Caco-2 (cell line): ENCODE measurements at regions of chr12 and their contacts with region 1.

Region 1: DNA sequence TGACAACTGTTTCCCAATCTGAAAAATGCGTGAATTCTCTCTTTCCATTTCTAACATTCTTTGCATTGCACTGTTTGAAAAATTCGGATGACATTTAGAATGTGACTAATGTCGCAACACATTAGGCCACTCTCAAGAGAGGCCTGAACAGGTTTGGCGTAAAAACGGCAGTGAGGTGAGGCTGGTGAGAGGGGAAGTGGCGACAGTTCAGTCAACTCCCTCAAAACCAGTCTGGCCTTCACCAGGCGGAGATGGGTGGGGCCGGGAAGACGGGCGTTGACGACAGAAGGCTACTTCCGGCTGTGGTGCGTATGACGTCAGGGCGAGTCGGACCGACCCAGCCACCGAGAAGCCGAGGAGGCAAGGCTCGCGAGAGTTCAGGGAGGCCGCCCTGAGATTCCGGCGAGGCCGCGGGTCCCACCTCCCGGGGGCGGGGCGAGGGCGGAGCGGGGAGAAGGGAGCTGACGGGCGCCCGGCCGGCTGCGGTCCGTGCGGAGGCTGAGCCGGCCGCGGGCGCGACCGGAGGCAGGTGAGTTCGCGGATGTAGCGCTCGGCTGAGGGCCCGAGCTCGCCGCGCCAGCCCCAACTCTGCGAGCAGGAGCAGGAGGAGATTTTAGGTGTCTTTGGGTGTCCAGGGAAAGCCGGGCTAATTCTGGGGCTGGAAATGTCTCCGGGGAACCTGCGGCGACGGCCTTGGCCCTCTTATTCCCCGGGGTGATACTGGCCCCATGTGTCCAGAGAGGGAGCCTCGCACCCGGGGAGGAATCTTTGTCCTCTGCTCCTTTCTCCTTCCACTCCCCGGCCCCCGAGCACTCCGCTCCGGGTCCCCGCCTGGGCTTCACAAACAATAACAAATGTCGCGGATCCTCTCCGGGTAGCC is at the start of gene STK38L:
- DNase-seq: peak; percentile 100
- H3K4me3 ChIP-seq: peak within 1 kb of the TSS; percentile 84
- H3K4me3 Mint-ChIP-seq: peak within 1 kb of the TSS; percentile 88
- H3K27ac Mint-ChIP-seq: peak within 1 kb of the TSS; percentile 89
- H3K4me1 ChIP-seq: peaks cover 10% of the 10 kb centered on the region; the same call in 1 of the 2 replicates
- H3K4me1 Mint-ChIP-seq: peaks cover 20% of the 10 kb centered on the region
- H3K27me3 ChIP-seq: no peaks in the 10 kb centered on the region
- H3K27me3 Mint-ChIP-seq: peaks cover 3% of the 10 kb centered on the region
- CTCF ChIP-seq: peak; percentile 26 to 27
- total RNA-seq, gene STK38L: 52.0 and 59.4 TPM in 2 replicates

Region 2: GRCh38 chr12:26937875-26938700 is 306.0 kb before region 1 on chr12 and contains the starts of genes FGFR1OP2 and INTS13:
- CTCF ChIA-PET with region 1: no interaction called
- POLR2A ChIA-PET with region 1: no interaction called
- intact Hi-C with region 1: loop called (anchors 1 kb)
- DNase-seq: peak; percentile 100
- H3K4me3 ChIP-seq: peak within 1 kb of the TSS; percentile 96
- H3K4me3 Mint-ChIP-seq: peak within 1 kb of the TSS; percentile 95
- H3K27ac Mint-ChIP-seq: peak within 1 kb of the TSS; percentile 91
- H3K4me1 ChIP-seq: peaks cover 22% of the 10 kb centered on the region
- H3K4me1 Mint-ChIP-seq: peaks cover 30% of the 10 kb centered on the region
- H3K27me3 ChIP-seq: no peaks in the 10 kb centered on the region
- H3K27me3 Mint-ChIP-seq: no peaks in the 10 kb centered on the region
- CTCF ChIP-seq: no peak
- total RNA-seq, gene FGFR1OP2: 77.9 and 86.9 TPM in 2 replicates
- total RNA-seq, gene INTS13: 40.1 and 41.5 TPM in 2 replicates

Region 3: DNA sequence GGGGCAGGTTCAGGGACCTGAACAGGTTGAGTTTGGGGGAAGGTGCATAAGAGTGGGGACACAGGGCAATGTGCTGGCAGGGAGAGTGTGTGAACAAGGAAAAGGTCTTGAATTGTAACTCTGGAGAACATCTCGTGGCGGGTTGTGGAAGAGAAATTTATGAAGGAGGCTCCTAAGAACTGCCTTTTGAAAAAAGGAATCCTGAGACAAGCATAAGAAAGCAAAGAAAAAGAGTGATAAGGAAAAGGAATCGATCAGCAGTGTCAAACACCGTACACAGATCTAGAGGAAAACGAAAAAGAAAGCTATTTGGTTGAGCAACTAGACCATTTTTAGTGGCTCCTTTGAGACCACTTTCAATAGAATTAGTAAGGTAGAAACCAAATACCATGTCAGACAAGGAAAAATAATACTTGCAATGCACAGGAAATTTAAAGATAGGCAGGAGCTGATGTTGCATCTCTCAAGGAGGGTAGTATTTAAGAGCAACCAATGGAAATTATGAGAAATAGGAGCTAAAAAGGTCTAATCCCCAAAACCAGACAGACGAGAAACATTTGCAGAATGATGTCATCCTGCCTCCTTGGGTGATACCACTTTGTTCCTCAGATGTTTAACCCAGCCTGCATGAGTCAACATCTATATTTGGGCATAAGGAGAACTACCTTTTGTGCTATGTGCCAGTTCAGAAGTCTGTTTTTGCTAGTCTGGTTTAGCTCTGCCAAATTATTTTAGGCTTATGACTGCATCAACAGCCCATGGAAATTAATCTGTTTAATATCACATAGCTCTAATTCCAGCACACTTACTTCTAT is 64.4 kb before region 1 on chr12:
- CTCF ChIA-PET with region 1: no interaction called
- POLR2A ChIA-PET with region 1: interaction called, 3 read pairs
- intact Hi-C with region 1: loop called (anchors 5 kb)
- DNase-seq: peak in 1 of 2 experiments; percentile 65
- H3K4me3 ChIP-seq: no peak overlapping the region
- H3K4me3 Mint-ChIP-seq: peak overlapping the region; percentile 8
- H3K27ac Mint-ChIP-seq: peak overlapping the region; percentile 83
- H3K4me1 ChIP-seq: peaks cover 24% of the 10 kb centered on the region
- H3K4me1 Mint-ChIP-seq: peaks cover 25% of the 10 kb centered on the region
- H3K27me3 ChIP-seq: no peaks in the 10 kb centered on the region
- H3K27me3 Mint-ChIP-seq: no peaks in the 10 kb centered on the region
- CTCF ChIP-seq: no peak

Region 4: DNA sequence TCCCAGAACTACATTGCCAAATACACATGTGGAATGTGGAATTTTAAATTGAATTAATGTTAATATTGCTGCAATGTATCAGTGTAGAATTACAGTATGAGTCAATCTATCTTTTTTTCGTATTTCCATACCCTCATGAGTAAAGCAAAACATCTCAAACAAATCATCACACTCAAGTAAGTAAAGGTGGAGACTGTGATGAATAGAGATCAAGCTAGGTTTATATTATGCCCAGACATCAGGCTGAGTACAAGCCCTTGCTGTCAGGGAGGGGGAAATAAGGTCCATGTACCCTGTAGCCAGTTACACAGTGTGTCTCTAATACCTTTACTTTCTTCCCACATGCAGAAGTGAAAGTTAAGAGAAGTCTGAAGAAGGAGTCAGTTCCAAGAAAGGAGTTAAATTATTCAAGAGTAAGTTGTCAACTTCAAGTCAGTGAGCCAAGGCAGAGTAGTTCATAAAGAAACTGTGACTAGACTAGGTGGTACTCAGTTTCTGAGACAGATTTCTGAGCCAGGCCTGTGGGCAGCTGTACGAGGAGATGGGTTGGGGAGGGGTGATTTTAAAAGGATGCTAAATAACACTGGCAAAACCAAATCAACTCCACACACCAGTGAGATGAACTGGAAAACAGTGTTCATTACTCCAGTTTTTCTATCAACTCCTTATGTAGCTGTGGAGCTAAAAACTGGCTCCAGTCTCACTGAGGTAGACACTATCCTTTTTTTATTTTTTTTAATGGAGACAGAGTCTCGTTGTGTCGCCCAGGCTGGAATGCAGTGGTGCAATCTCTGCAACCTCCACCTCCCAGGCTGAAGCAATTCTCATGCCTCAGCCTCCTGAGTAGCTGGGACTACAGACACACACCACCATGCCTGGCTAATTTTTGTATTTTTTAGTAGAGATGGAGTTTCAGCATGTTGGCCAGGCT is 23.7 kb before region 1 on chr12:
- CTCF ChIA-PET with region 1: no interaction called
- POLR2A ChIA-PET with region 1: no interaction called
- intact Hi-C with region 1: no loop called
- DNase-seq: no peak
- H3K4me3 ChIP-seq: no peak overlapping the region
- H3K4me3 Mint-ChIP-seq: no peak overlapping the region
- H3K27ac Mint-ChIP-seq: no peak overlapping the region
- H3K4me1 ChIP-seq: no peaks in the 10 kb centered on the region
- H3K4me1 Mint-ChIP-seq: no peaks in the 10 kb centered on the region
- H3K27me3 ChIP-seq: no peaks in the 10 kb centered on the region; the same call in 1 of the 2 replicates
- H3K27me3 Mint-ChIP-seq: no peaks in the 10 kb centered on the region
- CTCF ChIP-seq: no peak

Region 5: DNA sequence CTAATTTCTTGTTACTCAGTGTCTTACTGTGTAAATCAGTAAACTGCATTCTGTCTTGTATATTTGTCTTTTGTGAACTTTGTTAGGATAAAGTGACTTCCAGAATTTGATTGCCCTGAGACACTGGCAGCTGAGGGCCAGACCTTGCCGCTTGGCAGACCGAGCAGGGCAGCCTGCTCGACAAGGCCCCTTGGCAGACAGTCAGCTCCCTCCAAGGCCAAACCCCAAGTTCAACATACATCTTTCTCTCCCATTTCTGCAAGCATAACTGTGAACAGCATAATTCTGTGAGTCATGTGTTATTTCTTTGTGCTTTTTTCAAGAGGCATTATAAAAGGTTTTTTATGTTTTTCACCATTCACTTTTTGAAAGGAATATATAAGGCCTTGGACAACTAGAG is 49.4 kb after region 1 on chr12:
- CTCF ChIA-PET with region 1: no interaction called
- POLR2A ChIA-PET with region 1: no interaction called
- intact Hi-C with region 1: loop called (anchors 5 kb)
- DNase-seq: no peak
- H3K4me3 ChIP-seq: no peak overlapping the region
- H3K4me3 Mint-ChIP-seq: no peak overlapping the region
- H3K27ac Mint-ChIP-seq: no peak overlapping the region
- H3K4me1 ChIP-seq: peaks cover 11% of the 10 kb centered on the region; the same call in 1 of the 2 replicates
- H3K4me1 Mint-ChIP-seq: peaks cover 12% of the 10 kb centered on the region
- H3K27me3 ChIP-seq: no peaks in the 10 kb centered on the region
- H3K27me3 Mint-ChIP-seq: no peaks in the 10 kb centered on the region
- CTCF ChIP-seq: no peak

Region 6: GRCh38 chr12:27412047-27412446 is 168.0 kb after region 1 on chr12:
- CTCF ChIA-PET with region 1: no interaction called
- POLR2A ChIA-PET with region 1: no interaction called
- intact Hi-C with region 1: no loop called
- DNase-seq: no peak
- H3K4me3 ChIP-seq: no peak overlapping the region
- H3K4me3 Mint-ChIP-seq: no peak overlapping the region
- H3K27ac Mint-ChIP-seq: no peak overlapping the region
- H3K4me1 ChIP-seq: no peaks in the 10 kb centered on the region
- H3K4me1 Mint-ChIP-seq: peaks cover 12% of the 10 kb centered on the region
- H3K27me3 ChIP-seq: no peaks in the 10 kb centered on the region
- H3K27me3 Mint-ChIP-seq: no peaks in the 10 kb centered on the region
- CTCF ChIP-seq: no peak